IMR-90 (cell line): ENCODE measurements at regions of chr14 and their contacts with region 1.

Region 1: DNA sequence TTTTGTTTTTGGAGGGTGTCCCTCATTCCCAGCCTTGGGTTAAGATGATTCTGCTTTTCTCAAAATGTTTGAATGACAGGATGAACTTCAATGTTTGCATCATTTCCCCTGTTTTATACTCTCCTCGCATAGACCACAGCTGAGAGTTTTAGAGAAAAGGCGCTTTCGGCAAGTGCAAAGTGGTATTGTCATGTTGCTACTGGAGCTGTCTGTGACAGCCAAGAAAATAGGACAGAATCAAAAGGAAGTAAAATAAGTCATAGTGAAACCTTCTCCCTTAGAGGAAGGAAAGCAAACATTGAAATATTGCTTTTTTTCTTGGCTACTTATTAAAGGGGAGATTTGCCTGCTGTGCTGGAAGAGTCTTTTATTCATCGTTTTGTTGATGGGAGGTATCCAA is 33.5 kb upstream of the ARHGAP5 start:
- DNase-seq: no peak
- ATAC-seq: no peak
- H3K4me3 ChIP-seq: no peak overlapping the region
- H3K27ac ChIP-seq: no peak overlapping the region
- H3K4me1 ChIP-seq: no peaks in the 10 kb centered on the region
- H3K27me3 ChIP-seq: peaks cover 12% of the 10 kb centered on the region
- CTCF ChIP-seq: no peak
- POLR2A ChIP-seq: no peak
- RAD21 ChIP-seq: no peak

Region 2: GRCh38 chr14:31895206-31895605 is 148.4 kb before region 1 on chr14:
- CTCF ChIA-PET with region 1: no interaction called
- POLR2A ChIA-PET with region 1: no interaction called
- dilution Hi-C with region 1: no loop called
- in situ Hi-C with region 1: no loop called
- intact Hi-C with region 1: no loop called
- DNase-seq: peak; percentile 89
- ATAC-seq: peak; percentile 89
- H3K4me3 ChIP-seq: no peak overlapping the region
- H3K27ac ChIP-seq: no peak overlapping the region
- H3K4me1 ChIP-seq: peaks cover 12% of the 10 kb centered on the region
- H3K27me3 ChIP-seq: no peaks in the 10 kb centered on the region
- CTCF ChIP-seq: no peak
- POLR2A ChIP-seq: no peak
- RAD21 ChIP-seq: no peak

Region 3: DNA sequence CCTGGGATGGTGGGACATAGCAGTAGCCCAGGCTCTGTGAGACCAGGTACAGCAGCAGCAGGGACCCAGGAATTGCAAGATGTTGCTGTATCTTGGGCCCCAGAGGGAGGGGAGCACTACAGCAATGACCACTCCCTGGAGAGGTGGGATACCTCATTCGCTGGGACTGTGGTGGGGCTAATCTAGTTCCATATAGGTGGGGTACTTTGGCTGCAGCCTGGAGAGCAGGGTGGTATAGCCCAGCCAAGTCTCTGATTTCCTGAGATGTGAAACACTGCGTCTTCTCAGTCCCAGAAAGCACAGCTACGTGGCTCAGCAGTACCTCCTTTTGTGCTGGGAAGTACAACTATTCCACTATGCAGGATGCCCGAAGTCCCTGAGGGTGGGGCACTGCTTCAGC is 130.3 kb before region 1 on chr14:
- CTCF ChIA-PET with region 1: no interaction called
- POLR2A ChIA-PET with region 1: no interaction called
- dilution Hi-C with region 1: no loop called
- in situ Hi-C with region 1: no loop called
- intact Hi-C with region 1: no loop called
- DNase-seq: no peak
- ATAC-seq: no peak
- H3K4me3 ChIP-seq: no peak overlapping the region
- H3K27ac ChIP-seq: no peak overlapping the region
- H3K4me1 ChIP-seq: no peaks in the 10 kb centered on the region
- H3K27me3 ChIP-seq: no peaks in the 10 kb centered on the region; the same call in 1 of the 2 replicates
- CTCF ChIP-seq: no peak
- POLR2A ChIP-seq: no peak
- RAD21 ChIP-seq: no peak

Region 4: GRCh38 chr14:31968107-31968810 is 75.4 kb before region 1 on chr14:
- CTCF ChIA-PET with region 1: no interaction called
- POLR2A ChIA-PET with region 1: no interaction called
- dilution Hi-C with region 1: no loop called
- in situ Hi-C with region 1: no loop called
- intact Hi-C with region 1: loop called (anchors 5 kb)
- DNase-seq: peak; percentile 45
- ATAC-seq: peak; percentile 59
- H3K4me3 ChIP-seq: no peak overlapping the region
- H3K27ac ChIP-seq: no peak overlapping the region
- H3K4me1 ChIP-seq: peaks cover 15% of the 10 kb centered on the region
- H3K27me3 ChIP-seq: no peaks in the 10 kb centered on the region; the same call in 1 of the 2 replicates
- CTCF ChIP-seq: no peak
- POLR2A ChIP-seq: no peak
- RAD21 ChIP-seq: no peak